Ascending aorta (tissue), 2 donors: ENCODE measurements at regions of chr18 and their contacts with region 1.

Region 1: DNA sequence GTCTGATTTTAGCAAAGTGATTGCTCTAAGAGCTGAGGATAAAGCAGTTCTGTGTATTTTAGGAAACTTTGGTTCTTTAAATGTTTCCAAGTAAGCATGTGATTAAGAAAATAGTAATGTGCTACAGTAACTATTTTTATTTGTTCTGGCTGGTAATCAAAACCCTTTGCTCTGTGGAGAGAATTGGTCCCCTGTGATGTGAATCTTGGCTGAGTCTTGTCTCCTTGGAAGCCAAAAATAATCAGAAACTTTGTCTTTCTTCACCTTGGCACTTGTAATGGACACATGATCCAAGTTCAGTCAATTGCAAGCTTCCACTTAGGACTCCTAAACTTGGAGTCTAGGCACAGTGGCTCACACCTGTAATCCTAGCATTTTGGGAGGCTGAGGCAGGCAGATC is 422.7 kb upstream of the CDH20 start:
- DNase-seq: no peak
- H3K4me3 ChIP-seq: no peak overlapping the region
- H3K27ac ChIP-seq: no peak overlapping the region
- H3K4me1 ChIP-seq: peaks cover 0 to 7% of the 10 kb centered on the region in 2 donors
- H3K27me3 ChIP-seq: no peaks in the 10 kb centered on the region
- CTCF ChIP-seq: no peak

Region 2: GRCh38 chr18:60943297-60943696 is 32.8 kb after region 1 on chr18:
- intact Hi-C with region 1: no loop called
- DNase-seq: no peak
- H3K4me3 ChIP-seq: no peak overlapping the region
- H3K27ac ChIP-seq: no peak overlapping the region
- H3K4me1 ChIP-seq: no peaks in the 10 kb centered on the region
- H3K27me3 ChIP-seq: no peaks in the 10 kb centered on the region
- CTCF ChIP-seq: no peak

Region 3: GRCh38 chr18:60984510-60984909 is 74.0 kb after region 1 on chr18:
- intact Hi-C with region 1: loop called (anchors 10 kb)
- DNase-seq: no peak
- H3K4me3 ChIP-seq: no peak overlapping the region
- H3K27ac ChIP-seq: no peak overlapping the region
- H3K4me1 ChIP-seq: peaks cover 0 to 14% of the 10 kb centered on the region in 2 donors
- H3K27me3 ChIP-seq: no peaks in the 10 kb centered on the region
- CTCF ChIP-seq: no peak